OCI-LY7 (cell line): ENCODE measurements at regions of chr5 and their contacts with region 1.

Region 1: GRCh38 chr5:73135429-73136054 is 15.2 kb downstream of the TMEM171 start:
- DNase-seq: peak; percentile 70
- H3K4me3 ChIP-seq: no peak overlapping the region
- H3K27ac ChIP-seq: no peak overlapping the region
- H3K4me1 ChIP-seq: no peaks in the 10 kb centered on the region
- CTCF ChIP-seq: peak; percentile 80

Region 2: DNA sequence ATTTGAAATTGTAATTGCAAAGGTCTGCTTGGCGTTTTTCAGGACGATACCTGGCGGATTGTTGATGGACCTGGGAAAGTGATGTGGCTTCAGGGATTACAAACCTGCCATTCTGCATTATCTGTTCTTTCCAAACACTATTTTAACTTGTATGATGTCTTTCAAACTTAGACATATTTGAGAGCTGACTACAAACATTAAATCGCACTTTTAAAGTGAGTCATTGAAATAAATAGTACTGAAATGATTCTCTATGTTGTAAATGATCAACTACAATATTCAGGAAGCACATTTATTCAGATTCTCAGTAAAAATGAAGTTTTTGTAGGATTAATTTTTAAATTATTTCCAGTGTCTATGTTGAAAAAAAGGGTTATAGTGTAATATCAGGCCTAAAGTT is 47.5 kb before region 1 on chr5:
- CTCF ChIA-PET with region 1: no interaction called
- POLR2A ChIA-PET with region 1: no interaction called
- intact Hi-C with region 1: loop called (anchors 10 kb)
- DNase-seq: no peak
- H3K4me3 ChIP-seq: no peak overlapping the region
- H3K27ac ChIP-seq: no peak overlapping the region
- H3K4me1 ChIP-seq: no peaks in the 10 kb centered on the region
- CTCF ChIP-seq: no peak

Region 3: GRCh38 chr5:73365301-73365853 is 229.8 kb after region 1 on chr5:
- CTCF ChIA-PET with region 1: no interaction called
- POLR2A ChIA-PET with region 1: no interaction called
- intact Hi-C with region 1: no loop called
- DNase-seq: no peak
- H3K4me3 ChIP-seq: no peak overlapping the region
- H3K27ac ChIP-seq: no peak overlapping the region
- H3K4me1 ChIP-seq: no peaks in the 10 kb centered on the region
- CTCF ChIP-seq: no peak